HepG2 (cell line): ENCODE measurements at regions of chr15 and their contacts with region 1.

Region 1: DNA sequence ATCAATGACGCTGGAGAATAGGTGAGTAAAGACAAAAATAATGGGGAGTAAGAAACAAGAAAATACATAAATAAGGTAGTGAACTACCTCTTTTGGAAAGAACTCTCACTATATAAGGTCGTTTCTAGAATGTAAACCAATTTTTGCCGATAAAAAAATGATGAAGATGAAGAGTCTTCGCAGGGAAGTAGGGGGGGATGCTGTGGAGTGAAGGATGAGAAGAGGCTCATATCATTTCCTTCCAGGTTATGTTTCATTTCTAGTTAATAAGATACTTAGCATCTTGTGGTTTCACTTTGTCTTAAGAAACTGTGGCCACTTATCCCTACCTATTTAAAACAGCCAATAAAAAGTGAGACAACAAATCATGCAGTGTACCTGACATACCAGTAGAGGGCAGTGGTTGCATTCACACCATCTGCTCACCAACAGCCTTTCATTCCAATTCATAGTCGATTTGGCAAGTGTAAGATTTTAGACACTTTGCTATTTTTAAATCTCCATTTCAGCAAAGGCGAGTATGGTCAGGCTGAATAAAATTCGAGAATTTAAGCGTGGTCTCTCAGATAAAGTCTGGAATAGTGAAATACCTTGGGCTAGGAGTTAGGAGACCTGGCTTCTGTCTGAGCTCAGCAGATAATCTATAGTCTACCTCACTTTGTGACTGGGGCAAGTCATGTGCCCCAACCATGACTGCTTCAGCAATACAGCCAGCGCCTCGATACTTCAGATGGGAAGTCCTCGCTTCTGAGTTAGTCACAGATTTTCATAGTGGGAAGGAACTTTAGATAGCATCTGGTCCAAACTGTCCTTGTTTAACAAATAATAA is 28.9 kb upstream of the ICE2 start:
- DNase-seq: peak; percentile 43
- ATAC-seq: peak; percentile 75
- H3K4me3 ChIP-seq: no peak overlapping the region
- H3K27ac ChIP-seq: no peak overlapping the region
- H3K4me1 ChIP-seq: no peaks in the 10 kb centered on the region
- H3K27me3 ChIP-seq: no peaks in the 10 kb centered on the region
- CTCF ChIP-seq: peak; percentile 84
- EP300 ChIP-seq: no peak
- POLR2A ChIP-seq: no peak
- RAD21 ChIP-seq: peak; percentile 63

Region 2: GRCh38 chr15:60278879-60279278 is 228.9 kb before region 1 on chr15:
- CTCF ChIA-PET with region 1: no interaction called
- POLR2A ChIA-PET with region 1: no interaction called
- in situ Hi-C with region 1: no loop called
- intact Hi-C with region 1: no loop called
- DNase-seq: no peak
- ATAC-seq: no peak
- H3K4me3 ChIP-seq: no peak overlapping the region
- H3K27ac ChIP-seq: no peak overlapping the region
- H3K4me1 ChIP-seq: no peaks in the 10 kb centered on the region
- H3K27me3 ChIP-seq: no peaks in the 10 kb centered on the region
- CTCF ChIP-seq: no peak
- EP300 ChIP-seq: no peak
- POLR2A ChIP-seq: no peak
- RAD21 ChIP-seq: no peak

Region 3: GRCh38 chr15:60520825-60521368 is 13.1 kb after region 1 on chr15:
- CTCF ChIA-PET with region 1: no interaction called
- POLR2A ChIA-PET with region 1: no interaction called
- in situ Hi-C with region 1: no loop called
- intact Hi-C with region 1: loop called (anchors 2 kb)
- DNase-seq: peak; percentile 63
- ATAC-seq: peak; percentile 77
- H3K4me3 ChIP-seq: no peak overlapping the region
- H3K27ac ChIP-seq: no peak overlapping the region
- H3K4me1 ChIP-seq: no peaks in the 10 kb centered on the region
- H3K27me3 ChIP-seq: no peaks in the 10 kb centered on the region
- CTCF ChIP-seq: peak; percentile 78
- EP300 ChIP-seq: no peak
- POLR2A ChIP-seq: no peak
- RAD21 ChIP-seq: no peak